ENCODE measurements at regions of chr22 and their contacts with region 1.

Region 1: GRCh38 chr22:21952586-21953571 is at the start of gene PPM1F:
- DNase-seq: peak; percentile 90
- ATAC-seq: peak; percentile 91
- H3K4me3 Mint-ChIP-seq: peak within 1 kb of the TSS; percentile 74
- H3K27ac Mint-ChIP-seq: peak within 1 kb of the TSS; percentile 68
- H3K4me1 Mint-ChIP-seq: peaks cover 14% of the 10 kb centered on the region
- H3K27me3 Mint-ChIP-seq: peaks cover 3% of the 10 kb centered on the region
- total RNA-seq, gene PPM1F: 14.4 to 22.9 TPM

Region 2: GRCh38 chr22:21712894-21713712 is 239.8 kb before region 1 on chr22:
- CTCF ChIA-PET with region 1: interaction called, 10 read pairs
- DNase-seq: peak; percentile 74
- ATAC-seq: peak; percentile 89
- H3K4me3 Mint-ChIP-seq: no peak overlapping the region
- H3K27ac Mint-ChIP-seq: no peak overlapping the region
- H3K4me1 Mint-ChIP-seq: peaks cover 12% of the 10 kb centered on the region
- H3K27me3 Mint-ChIP-seq: no peaks in the 10 kb centered on the region

Region 3: GRCh38 chr22:22248878-22249277 is 296.0 kb after region 1 on chr22:
- CTCF ChIA-PET with region 1: no interaction called
- DNase-seq: peak; percentile 52
- ATAC-seq: peak; percentile 36
- H3K4me3 Mint-ChIP-seq: no peak overlapping the region
- H3K27ac Mint-ChIP-seq: no peak overlapping the region
- H3K4me1 Mint-ChIP-seq: peaks cover 17% of the 10 kb centered on the region
- H3K27me3 Mint-ChIP-seq: no peaks in the 10 kb centered on the region

Region 4: GRCh38 chr22:22371031-22371541 is 418.2 kb after region 1 on chr22:
- CTCF ChIA-PET with region 1: no interaction called
- DNase-seq: no peak
- ATAC-seq: no peak
- H3K4me3 Mint-ChIP-seq: no peak overlapping the region
- H3K27ac Mint-ChIP-seq: no peak overlapping the region
- H3K4me1 Mint-ChIP-seq: no peaks in the 10 kb centered on the region
- H3K27me3 Mint-ChIP-seq: peaks cover 72% of the 10 kb centered on the region